ENCODE measurements at regions of chr16 and their contacts with region 1.

Region 1: DNA sequence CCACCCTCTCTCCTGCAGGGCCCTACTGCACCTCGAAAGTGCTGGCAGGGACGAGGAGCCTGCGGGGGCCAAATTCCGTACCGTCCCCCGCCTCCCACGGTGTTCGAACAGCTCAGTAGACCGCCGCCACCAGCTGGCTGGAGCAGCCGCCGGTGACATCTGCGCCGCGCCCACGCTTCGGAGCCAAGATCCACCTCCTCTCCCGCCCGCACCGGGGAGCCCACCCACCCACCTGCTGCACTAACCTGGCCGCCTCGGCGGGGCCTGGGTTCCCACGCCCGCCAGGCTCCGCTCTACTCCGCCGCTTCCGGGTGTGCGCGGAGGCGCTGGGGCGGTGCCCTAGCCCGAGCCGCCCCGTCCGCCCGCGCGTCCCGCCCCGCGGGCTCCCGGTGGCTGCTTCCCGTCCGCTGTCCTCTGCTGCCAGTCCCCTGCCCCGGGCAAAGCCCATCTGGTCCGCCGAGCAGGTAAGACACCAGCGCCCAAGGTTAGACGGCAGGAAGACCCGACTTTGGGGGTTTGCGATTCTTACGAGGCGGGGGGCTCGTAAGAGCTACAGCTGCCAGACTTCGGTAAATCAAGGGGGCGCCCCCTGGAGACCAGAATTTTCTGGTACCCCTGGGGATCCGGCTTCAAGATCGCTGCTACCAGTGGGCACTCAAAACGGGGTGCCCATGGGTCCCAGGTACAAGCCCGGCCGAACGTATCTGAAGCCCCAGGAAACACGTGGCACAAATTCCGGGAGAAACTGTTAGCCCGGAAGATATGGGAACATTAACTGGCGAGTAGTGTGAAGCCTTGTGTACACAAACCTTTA is at the starts of genes FBXL8 and TRADD:
- DNase-seq: no peak
- H3K4me3 ChIP-seq: peak within 1 kb of the TSS; percentile 93
- CTCF ChIP-seq: peak; percentile 34

Region 2: GRCh38 chr16:66954097-66954659 is 205.6 kb before region 1 on chr16:
- CTCF ChIA-PET with region 1: interaction called, 57 read pairs
- POLR2A ChIA-PET with region 1: no interaction called
- DNase-seq: no peak
- H3K4me3 ChIP-seq: no peak overlapping the region
- CTCF ChIP-seq: peak; percentile 78

Region 3: DNA sequence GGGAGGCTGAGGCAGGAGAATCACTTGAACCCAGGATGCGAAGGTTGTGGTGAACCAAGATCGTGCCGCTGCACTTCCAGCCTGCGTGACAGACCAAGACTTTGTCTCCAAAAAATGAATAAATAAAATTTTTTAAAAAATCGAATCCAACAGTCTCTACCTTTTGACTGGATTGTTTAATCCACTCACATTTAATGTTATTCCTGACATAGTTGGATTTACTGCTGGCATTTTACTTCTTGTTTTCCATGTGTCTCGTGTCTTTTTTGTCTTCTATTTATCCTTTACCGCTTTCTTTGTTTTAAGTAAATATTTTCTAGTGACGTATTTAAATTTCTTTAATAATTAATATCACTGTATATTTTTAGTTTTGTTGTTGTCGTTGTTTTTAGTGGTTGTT is 176.8 kb before region 1 on chr16:
- CTCF ChIA-PET with region 1: interaction called, 241 read pairs
- POLR2A ChIA-PET with region 1: no interaction called
- DNase-seq: no peak
- H3K4me3 ChIP-seq: no peak overlapping the region
- CTCF ChIP-seq: no peak

Region 4: GRCh38 chr16:67017810-67018488 is 141.9 kb before region 1 on chr16:
- CTCF ChIA-PET with region 1: interaction called, 224 read pairs
- POLR2A ChIA-PET with region 1: interaction called, 6 read pairs
- DNase-seq: peak; percentile 72
- H3K4me3 ChIP-seq: no peak overlapping the region
- CTCF ChIP-seq: peak; percentile 81

Region 5: GRCh38 chr16:67115639-67116038 is 44.2 kb before region 1 on chr16:
- CTCF ChIA-PET with region 1: interaction called, 12 read pairs
- POLR2A ChIA-PET with region 1: no interaction called
- DNase-seq: peak; percentile 74
- H3K4me3 ChIP-seq: no peak overlapping the region
- CTCF ChIP-seq: no peak

Region 6: DNA sequence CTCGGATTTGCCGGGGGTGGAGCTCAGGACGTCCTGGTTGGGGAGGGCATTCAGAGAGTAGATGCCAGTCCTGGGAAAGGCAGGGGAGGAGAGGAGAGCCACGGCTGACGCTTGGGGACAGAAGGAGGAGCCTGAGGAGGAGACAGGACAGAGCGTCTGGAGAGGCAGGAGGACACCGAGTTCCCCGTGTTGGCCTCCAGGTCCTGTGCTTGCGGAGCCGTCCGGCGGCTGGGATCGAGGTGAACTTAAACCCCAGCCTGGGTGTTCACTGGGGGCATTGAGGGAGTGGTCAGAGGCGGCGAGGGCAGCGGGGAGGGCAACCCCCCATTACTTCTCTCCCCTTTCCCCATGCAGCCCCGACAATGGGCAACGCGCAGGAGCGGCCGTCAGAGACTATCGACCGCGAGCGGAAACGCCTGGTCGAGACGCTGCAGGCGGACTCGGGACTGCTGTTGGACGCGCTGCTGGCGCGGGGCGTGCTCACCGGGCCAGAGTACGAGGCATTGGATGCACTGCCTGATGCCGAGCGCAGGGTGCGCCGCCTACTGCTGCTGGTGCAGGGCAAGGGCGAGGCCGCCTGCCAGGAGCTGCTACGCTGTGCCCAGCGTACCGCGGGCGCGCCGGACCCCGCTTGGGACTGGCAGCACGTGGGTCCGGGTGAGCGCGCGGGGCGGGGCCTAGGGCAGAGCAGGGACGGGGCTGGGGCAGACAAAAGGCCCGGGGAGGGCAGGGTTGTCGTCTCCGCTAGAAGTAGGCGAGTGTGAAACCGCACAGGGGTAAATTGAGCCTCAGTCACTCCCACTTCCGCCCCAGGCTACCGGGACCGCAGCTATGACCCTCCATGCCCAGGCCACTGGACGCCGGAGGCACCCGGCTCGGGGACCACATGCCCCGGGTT is 14.3 kb after region 1 on chr16:
- CTCF ChIA-PET with region 1: interaction called, 54 read pairs
- POLR2A ChIA-PET with region 1: interaction called, 8 read pairs
- DNase-seq: no peak
- H3K4me3 ChIP-seq: peak overlapping the region; percentile 56
- CTCF ChIP-seq: peak; percentile 58

Region 7: DNA sequence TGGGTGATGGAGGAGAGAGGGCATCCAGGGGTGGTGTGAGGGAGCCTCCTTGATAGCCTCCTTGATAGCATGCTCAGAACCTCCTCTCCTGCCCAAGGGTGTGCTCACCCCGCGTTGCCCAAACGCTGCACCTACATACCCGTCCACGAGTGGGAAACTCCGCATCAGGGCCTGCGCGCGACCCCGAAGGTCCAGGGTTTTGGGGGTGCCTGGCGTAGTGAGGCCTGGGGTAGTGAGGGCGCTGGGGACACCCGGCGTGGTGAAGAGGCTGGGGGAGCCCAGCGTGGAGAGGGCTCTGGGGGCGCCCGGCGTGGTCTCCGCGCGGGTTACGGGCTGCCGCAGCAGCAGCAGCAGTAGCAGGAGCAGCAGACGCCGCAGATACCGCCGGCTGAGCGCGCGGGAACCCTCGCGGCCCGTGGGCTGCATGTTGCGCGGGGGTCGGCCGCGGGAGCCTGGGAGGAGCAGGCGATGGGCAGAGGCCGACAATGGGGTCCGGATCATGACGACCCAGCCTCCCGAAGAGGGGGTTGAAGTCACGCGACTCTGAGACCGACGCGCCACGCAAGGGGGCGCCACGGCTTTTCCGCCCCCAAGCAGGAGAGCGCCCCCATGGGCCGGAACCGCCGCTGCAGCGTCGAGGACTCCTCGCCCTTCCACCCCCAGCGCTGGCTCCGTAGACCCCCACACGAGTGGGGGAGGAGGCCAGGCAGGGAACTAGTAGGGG is 820.3 kb after region 1 on chr16 and contains the start of gene DPEP3:
- CTCF ChIA-PET with region 1: no interaction called
- POLR2A ChIA-PET with region 1: no interaction called
- DNase-seq: no peak
- H3K4me3 ChIP-seq: no peak within 1 kb of the TSS
- CTCF ChIP-seq: peak; percentile 19